Heart right ventricle (tissue), 16 donors: ENCODE measurements at regions of chr1 and their contacts with region 1.

Region 1: DNA sequence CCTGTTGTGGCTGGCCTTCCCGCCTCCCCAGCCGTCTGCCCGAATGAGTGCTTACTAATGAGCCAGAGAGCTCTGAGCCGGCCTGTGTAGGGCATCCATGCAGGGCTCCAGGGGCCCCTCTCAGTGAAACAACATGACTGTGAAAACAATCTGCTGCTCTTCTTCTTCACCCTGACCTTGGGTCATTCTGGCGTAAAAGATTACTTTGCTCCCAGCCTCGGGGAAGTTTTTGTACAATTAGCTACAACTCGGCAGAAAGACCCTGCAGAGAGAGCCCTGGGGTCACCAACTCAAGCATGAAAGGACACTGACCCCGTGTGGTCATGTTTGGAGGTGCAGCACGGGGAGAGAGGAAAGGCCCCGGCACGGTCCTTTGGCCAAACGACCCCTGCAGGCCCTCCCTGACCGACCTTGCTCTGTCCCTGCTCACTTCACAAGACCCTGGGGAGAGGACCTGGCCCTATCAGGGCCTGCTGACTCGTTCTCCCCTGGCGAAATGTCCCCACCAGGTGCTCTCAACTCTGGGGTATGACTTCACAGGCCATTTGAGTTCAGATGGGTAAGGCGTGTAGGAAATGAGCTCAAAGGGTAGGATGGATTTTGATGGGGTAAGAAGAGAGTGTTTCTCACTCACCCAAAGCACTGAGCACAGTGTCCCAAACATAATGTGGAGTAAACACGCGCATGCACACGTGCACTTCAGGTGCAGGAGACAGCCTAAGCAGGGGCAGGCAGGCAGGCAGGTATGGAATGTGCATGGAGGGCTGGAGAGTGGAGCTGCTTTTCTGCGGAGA is 22.9 kb upstream of the FAM20B start:
- DNase-seq: peak; percentile 74 to 79
- ATAC-seq: peak; percentile 71 to 88 (median 85)
- H3K4me3 ChIP-seq: peak overlapping the region in 3 of 10 donors; percentile 2 to 18 (median 6)
- H3K27ac ChIP-seq: peak overlapping the region in 2 of 10 donors; percentile 31 to 48
- H3K4me1 ChIP-seq: peaks cover 0 to 10% (median 7%) of the 10 kb centered on the region in 9 donors
- H3K27me3 ChIP-seq: no peaks in the 10 kb centered on the region
- CTCF ChIP-seq: peak; percentile 81 to 98 (median 96)

Region 2: GRCh38 chr1:178310685-178311105 is 692.1 kb before region 1 on chr1:
- intact Hi-C with region 1: loop called in 1 of 10 experiments (anchors 10 kb)
- DNase-seq: no peak
- ATAC-seq: peak; percentile 42 to 93 (median 86)
- H3K4me3 ChIP-seq: no peak overlapping the region
- H3K27ac ChIP-seq: peak overlapping the region in 1 of 10 donors; percentile 28
- H3K4me1 ChIP-seq: peaks cover 0 to 27% (median 10%) of the 10 kb centered on the region in 9 donors
- H3K27me3 ChIP-seq: no peaks in the 10 kb centered on the region
- CTCF ChIP-seq: peak; percentile 57 to 85 (median 77)

Region 3: DNA sequence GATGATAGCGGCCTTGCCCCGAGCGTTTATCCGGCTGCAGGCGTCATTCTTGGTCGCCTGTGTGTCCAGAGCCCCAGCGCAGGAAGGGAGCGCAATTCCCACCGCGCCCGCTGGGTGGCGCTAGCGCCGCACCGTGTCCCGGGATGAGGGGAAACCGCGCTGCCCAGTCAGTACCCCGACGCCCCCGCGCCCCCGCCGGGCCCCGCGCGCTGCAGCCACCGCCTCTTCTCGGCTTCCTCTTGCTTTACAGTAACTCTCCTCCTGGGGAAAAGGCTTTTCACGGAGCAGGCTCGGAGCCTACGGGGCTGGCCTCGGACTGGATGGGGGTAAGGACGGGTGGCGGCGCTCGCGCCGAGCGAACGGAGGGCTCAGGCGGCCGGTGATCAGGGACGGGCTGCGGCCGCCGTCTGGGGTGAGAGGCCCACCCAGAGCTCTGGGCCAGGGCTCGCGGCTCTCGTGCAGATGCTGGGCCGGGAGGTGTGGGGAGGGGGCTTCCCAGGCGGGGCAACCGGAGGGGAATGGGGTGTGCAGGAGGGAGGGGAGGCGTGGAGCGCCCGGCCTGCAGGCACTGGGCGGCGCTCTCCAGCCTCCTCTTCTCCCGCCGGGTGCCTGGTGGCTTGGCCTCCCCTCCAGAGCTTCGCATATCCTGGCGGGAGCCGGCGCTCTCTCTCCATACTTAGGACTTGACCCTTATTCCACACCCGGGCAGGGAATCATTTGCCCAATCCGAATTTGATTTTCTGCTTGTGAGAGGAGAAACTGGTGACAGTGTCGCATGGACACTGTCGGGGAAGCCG is 460.0 kb before region 1 on chr1:
- intact Hi-C with region 1: loop called in 7 of 10 experiments (anchors 1 to 10 kb)
- DNase-seq: peak; percentile 90 to 94
- ATAC-seq: peak; percentile 88 to 97 (median 92)
- H3K4me3 ChIP-seq: peak overlapping the region; percentile 50 to 87 (median 66)
- H3K27ac ChIP-seq: peak overlapping the region; percentile 4 to 88 (median 80)
- H3K4me1 ChIP-seq: peaks cover 0 to 33% (median 18%) of the 10 kb centered on the region in 9 donors
- H3K27me3 ChIP-seq: no peaks in the 10 kb centered on the region
- CTCF ChIP-seq: peak; percentile 91 to 100 (median 99)

Region 4: DNA sequence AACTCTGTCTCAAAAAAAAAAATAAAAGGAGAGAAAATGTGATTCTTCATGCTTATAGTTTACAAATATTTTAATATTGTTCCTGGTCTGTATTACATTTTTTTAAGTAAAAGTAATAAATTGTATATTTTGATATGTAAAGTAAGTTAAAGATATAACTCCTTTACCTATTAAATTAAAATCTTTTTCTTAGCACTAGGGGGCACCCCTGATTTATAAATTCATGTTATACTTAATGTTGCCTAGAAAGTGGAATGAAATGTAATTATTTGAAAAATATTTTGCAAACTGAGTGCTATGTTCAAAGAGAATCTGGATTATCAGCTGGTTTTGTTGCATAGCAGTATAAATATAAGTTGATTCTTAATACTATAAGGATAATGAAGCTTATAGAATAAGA is 228.5 kb before region 1 on chr1:
- intact Hi-C with region 1: loop called (anchors 1 to 10 kb)
- DNase-seq: no peak
- ATAC-seq: no peak
- H3K4me3 ChIP-seq: no peak overlapping the region
- H3K27ac ChIP-seq: no peak overlapping the region
- H3K4me1 ChIP-seq: no peaks in the 10 kb centered on the region
- H3K27me3 ChIP-seq: no peaks in the 10 kb centered on the region
- CTCF ChIP-seq: peak in 8 of 9 donors; percentile 13 to 65 (median 50)

Region 5: DNA sequence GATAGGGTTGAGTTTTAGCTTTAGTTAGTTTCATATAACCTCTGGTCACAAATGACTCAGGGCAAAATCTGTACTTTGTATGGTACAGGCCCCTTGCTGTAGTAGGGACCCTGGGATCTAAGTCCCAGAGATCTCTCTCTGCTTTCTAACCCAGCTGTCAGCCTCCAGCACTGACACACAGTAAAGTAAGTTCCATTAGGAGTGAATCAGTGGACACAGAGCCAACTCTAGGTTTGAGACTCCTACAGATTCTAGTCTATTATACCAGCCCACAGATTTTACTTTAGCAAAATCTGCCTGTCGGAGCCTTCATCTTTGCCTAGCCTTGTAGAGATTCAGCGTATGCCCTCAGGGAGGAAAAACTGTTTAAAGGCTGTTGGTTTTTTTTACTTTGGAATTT is 184.3 kb before region 1 on chr1:
- intact Hi-C with region 1: loop called in 7 of 10 experiments (anchors 2 to 10 kb)
- DNase-seq: no peak
- ATAC-seq: no peak
- H3K4me3 ChIP-seq: no peak overlapping the region
- H3K27ac ChIP-seq: no peak overlapping the region
- H3K4me1 ChIP-seq: peaks cover 0 to 4% (median 0%) of the 10 kb centered on the region in 9 donors
- H3K27me3 ChIP-seq: no peaks in the 10 kb centered on the region
- CTCF ChIP-seq: no peak